Naive thymus-derived CD4-positive, alpha-beta T cell (primary cell): ENCODE measurements at regions of chr21 and their contacts with region 1.

Region 1: DNA sequence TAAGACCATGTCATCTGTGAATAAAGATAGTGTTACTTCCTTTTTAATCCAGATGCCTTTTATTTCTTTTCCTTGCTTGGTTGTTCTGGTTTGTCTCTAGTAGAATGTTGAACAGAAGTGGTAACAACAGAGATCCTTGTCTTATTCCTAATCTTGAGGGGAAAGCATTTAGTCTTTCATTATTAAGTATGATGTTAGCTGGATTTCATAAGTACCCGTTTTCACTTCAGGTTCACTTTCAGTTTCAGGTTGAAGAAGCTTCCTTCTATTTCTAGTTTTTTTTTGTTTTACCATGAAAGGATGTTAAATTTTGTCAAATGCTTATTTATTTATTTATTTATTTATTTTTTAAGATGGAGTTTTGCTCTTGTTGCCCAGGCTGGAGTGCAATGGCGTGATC is 22.3 kb upstream of the AGPAT3 start:
- DNase-seq: peak in 4 of 9 donors; percentile 4 to 15 (median 12)
- ATAC-seq: no peak
- H3K4me3 ChIP-seq: no peak overlapping the region
- H3K4me3 Mint-ChIP-seq: peak overlapping the region in 8 of 10 donors; percentile 37 to 82 (median 53)
- H3K27ac ChIP-seq: no peak overlapping the region
- H3K27ac Mint-ChIP-seq: peak overlapping the region in 7 of 9 donors; percentile 3 to 83 (median 65)
- H3K4me1 ChIP-seq: peaks cover 0 to 4% of the 10 kb centered on the region in 2 donors
- H3K4me1 Mint-ChIP-seq: peaks cover 6 to 22% (median 7%) of the 10 kb centered on the region in 7 donors
- H3K27me3 ChIP-seq: no peaks in the 10 kb centered on the region
- H3K27me3 Mint-ChIP-seq: peaks cover 0 to 7% (median 2%) of the 10 kb centered on the region in 5 donors

Region 2: DNA sequence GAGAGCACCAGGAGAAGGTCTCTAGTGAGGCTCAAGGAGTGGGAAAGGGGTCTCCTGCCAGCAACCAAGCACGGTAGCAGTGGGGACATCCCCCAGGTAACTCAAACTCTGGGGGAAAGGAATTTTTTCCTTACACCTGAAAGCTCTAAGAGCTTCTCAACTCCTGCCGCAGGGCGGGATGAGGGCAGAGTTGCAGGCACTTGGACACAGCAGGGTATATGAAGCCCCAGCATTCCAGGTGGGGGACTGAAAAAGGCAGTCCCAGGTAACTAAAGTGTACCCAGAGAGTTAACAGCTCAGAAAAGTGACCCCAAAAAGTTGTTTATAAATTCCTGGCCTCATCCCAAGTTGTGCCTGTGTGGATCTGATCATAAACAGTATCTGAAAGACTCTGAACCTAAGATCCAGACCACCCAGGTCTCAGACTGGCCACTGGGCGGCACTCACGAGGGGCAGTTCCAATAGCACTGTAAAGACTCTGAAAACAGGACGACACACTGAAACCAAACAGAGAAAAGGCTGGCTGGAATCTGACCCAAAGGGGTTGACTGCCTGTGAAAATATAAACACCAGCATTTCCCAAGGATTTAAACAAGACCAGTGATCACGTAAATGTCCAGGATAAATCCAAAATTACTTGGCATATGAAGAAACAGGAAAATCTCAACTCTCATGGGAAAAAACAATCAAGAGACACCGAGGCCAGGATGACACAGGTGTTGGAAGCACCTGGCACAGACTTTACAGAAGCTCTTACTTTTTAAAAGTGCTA is 231.0 kb before region 1 on chr21:
- CTCF ChIA-PET with region 1: no interaction called
- POLR2A ChIA-PET with region 1: no interaction called
- intact Hi-C with region 1: no loop called
- DNase-seq: no peak
- ATAC-seq: no peak
- H3K4me3 ChIP-seq: no peak overlapping the region
- H3K4me3 Mint-ChIP-seq: no peak overlapping the region
- H3K27ac ChIP-seq: no peak overlapping the region
- H3K27ac Mint-ChIP-seq: no peak overlapping the region
- H3K4me1 ChIP-seq: no peaks in the 10 kb centered on the region
- H3K4me1 Mint-ChIP-seq: peaks cover 0 to 14% (median 0%) of the 10 kb centered on the region in 7 donors
- H3K27me3 ChIP-seq: no peaks in the 10 kb centered on the region
- H3K27me3 Mint-ChIP-seq: peaks cover 0 to 8% (median 0%) of the 10 kb centered on the region in 5 donors

Region 3: GRCh38 chr21:43634618-43635017 is 208.1 kb before region 1 on chr21:
- CTCF ChIA-PET with region 1: no interaction called
- POLR2A ChIA-PET with region 1: no interaction called
- intact Hi-C with region 1: no loop called
- DNase-seq: no peak
- ATAC-seq: no peak
- H3K4me3 ChIP-seq: no peak overlapping the region
- H3K4me3 Mint-ChIP-seq: no peak overlapping the region
- H3K27ac ChIP-seq: no peak overlapping the region
- H3K27ac Mint-ChIP-seq: no peak overlapping the region
- H3K4me1 ChIP-seq: no peaks in the 10 kb centered on the region
- H3K4me1 Mint-ChIP-seq: peaks cover 0 to 2% (median 0%) of the 10 kb centered on the region in 7 donors
- H3K27me3 ChIP-seq: no peaks in the 10 kb centered on the region
- H3K27me3 Mint-ChIP-seq: peaks cover 0 to 13% (median 0%) of the 10 kb centered on the region in 5 donors

Region 4: GRCh38 chr21:43758111-43758641 is 84.6 kb before region 1 on chr21:
- CTCF ChIA-PET with region 1: no interaction called
- POLR2A ChIA-PET with region 1: no interaction called
- intact Hi-C with region 1: no loop called
- DNase-seq: no peak
- ATAC-seq: no peak
- H3K4me3 ChIP-seq: no peak overlapping the region
- H3K4me3 Mint-ChIP-seq: no peak overlapping the region
- H3K27ac ChIP-seq: no peak overlapping the region
- H3K27ac Mint-ChIP-seq: peak overlapping the region in 2 of 9 donors; percentile 13 to 33
- H3K4me1 ChIP-seq: no peaks in the 10 kb centered on the region
- H3K4me1 Mint-ChIP-seq: no peaks in the 10 kb centered on the region
- H3K27me3 ChIP-seq: no peaks in the 10 kb centered on the region
- H3K27me3 Mint-ChIP-seq: no peaks in the 10 kb centered on the region

Region 5: DNA sequence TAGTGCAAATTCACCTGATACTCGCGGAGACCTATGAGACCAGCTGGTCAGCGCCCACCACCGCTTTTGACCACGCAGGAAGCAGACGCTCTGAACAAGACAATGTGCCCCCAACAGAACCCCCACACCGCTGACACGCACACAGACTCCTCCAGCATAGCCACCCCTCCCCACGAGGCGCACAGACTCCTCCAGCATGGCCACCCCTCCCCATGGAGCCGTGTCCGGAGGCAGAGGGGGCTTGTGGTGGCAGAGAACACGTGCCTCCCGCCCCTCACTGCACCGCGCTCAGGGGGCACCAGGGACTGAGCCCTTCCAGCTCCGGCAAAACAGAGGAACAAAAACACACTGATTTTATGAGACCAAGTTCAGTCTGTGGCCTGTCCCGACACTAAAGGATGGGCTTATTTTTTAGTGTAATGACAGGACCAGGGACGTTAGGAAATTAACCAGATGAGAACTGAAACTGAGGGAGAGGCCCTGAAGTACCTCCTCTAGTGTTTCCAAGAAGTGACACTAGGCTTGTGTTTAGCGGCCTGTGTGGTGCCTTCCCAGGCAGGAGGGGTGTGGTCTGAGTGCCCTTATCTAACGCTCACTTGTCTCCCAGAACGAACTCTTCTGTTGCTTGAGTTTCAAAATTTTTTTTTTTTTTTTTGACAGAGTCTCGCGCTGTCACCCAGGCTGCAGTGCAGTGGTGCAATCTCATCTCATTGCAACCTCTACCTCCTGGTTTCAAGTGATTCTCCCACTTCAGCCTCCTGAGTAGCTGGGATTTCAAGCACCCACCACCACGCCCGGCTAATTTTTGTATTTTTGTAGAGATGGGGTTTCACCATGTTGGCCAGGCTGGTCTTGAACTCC is 12.3 kb after region 1 on chr21:
- CTCF ChIA-PET with region 1: interaction called, 4 read pairs
- POLR2A ChIA-PET with region 1: no interaction called
- intact Hi-C with region 1: loop called in 1 of 2 experiments (anchors 1 kb)
- DNase-seq: peak in 1 of 9 donors; percentile 61
- ATAC-seq: peak; percentile 87
- H3K4me3 ChIP-seq: no peak overlapping the region
- H3K4me3 Mint-ChIP-seq: peak overlapping the region in 1 of 10 donors; percentile 81
- H3K27ac ChIP-seq: no peak overlapping the region
- H3K27ac Mint-ChIP-seq: peak overlapping the region in 1 of 9 donors; percentile 93
- H3K4me1 ChIP-seq: no peaks in the 10 kb centered on the region
- H3K4me1 Mint-ChIP-seq: peaks cover 0 to 47% (median under 1%) of the 10 kb centered on the region in 7 donors
- H3K27me3 ChIP-seq: no peaks in the 10 kb centered on the region
- H3K27me3 Mint-ChIP-seq: peaks cover 0 to 10% (median 5%) of the 10 kb centered on the region in 5 donors